ENCODE measurements at regions of chr22 and their contacts with region 1.

Region 1: DNA sequence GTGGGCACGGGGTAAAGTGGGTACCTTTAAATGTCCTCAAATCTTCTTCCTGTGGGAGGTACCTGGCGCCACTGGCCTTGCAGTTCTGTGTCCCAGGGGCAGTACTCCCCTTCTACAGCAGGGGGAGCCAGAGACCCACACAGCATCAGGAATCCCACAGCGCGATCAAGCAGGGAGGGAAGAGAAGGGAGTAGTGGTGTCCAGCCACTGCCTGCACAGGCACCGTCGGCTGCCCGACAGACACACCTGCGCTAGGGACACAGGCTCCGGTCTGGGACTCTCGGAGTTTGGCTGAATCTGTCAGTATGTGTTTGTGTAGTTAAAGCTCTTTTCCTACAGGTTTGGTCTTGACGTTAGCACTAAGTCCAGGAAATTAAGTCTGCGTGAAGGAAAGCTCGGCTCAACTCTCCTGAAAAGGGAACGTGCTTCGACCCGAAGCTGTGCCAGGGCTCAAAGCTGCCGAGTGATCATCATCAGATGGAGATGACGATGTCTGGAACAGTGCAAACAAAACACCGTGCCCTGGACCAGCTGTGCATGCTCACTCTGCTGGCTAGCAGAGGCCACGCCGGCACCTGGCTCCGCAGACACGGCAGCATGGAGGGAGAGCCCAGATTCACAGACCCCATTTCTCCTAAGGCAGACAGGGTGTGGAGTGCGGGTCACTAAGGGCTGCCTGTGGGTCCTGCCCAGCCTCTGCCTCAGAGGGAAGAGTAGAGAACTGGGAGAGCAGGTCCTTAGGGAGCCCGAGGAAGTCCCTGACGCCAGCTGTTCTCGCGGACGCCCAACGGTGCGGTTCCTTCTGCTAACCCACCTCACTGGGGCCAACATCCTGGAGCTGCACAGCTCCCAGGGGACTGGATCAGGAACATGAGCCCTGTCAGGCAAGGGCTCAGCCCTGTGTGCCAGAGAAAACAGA is 56.0 kb upstream of the BID start:
- DNase-seq: peak; percentile 91
- H3K4me3 ChIP-seq: no peak overlapping the region
- H3K27ac ChIP-seq: peak overlapping the region in 7 of 8 donors; percentile 51 to 89 (median 79)
- H3K4me1 ChIP-seq: peaks cover 15 to 48% (median 36%) of the 10 kb centered on the region in 6 donors
- H3K27me3 ChIP-seq: no peaks in the 10 kb centered on the region
- CTCF ChIP-seq: peak; percentile 90 to 99 (median 98)
- POLR2A ChIP-seq: no peak

Region 2: GRCh38 chr22:17717708-17718107 is 112.6 kb before region 1 on chr22:
- intact Hi-C with region 1: no loop called
- DNase-seq: no peak
- H3K4me3 ChIP-seq: no peak overlapping the region
- H3K27ac ChIP-seq: no peak overlapping the region
- H3K4me1 ChIP-seq: no peaks in the 10 kb centered on the region
- H3K27me3 ChIP-seq: no peaks in the 10 kb centered on the region
- CTCF ChIP-seq: no peak
- POLR2A ChIP-seq: no peak

Region 3: GRCh38 chr22:17964643-17965042 is 134.3 kb after region 1 on chr22:
- intact Hi-C with region 1: no loop called
- DNase-seq: peak; percentile 76
- H3K4me3 ChIP-seq: peak overlapping the region in 1 of 8 donors; percentile 37
- H3K27ac ChIP-seq: peak overlapping the region in 7 of 8 donors; percentile 5 to 63 (median 47)
- H3K4me1 ChIP-seq: peaks cover 7 to 97% (median 59%) of the 10 kb centered on the region in 6 donors
- H3K27me3 ChIP-seq: no peaks in the 10 kb centered on the region
- CTCF ChIP-seq: no peak
- POLR2A ChIP-seq: no peak

Region 4: DNA sequence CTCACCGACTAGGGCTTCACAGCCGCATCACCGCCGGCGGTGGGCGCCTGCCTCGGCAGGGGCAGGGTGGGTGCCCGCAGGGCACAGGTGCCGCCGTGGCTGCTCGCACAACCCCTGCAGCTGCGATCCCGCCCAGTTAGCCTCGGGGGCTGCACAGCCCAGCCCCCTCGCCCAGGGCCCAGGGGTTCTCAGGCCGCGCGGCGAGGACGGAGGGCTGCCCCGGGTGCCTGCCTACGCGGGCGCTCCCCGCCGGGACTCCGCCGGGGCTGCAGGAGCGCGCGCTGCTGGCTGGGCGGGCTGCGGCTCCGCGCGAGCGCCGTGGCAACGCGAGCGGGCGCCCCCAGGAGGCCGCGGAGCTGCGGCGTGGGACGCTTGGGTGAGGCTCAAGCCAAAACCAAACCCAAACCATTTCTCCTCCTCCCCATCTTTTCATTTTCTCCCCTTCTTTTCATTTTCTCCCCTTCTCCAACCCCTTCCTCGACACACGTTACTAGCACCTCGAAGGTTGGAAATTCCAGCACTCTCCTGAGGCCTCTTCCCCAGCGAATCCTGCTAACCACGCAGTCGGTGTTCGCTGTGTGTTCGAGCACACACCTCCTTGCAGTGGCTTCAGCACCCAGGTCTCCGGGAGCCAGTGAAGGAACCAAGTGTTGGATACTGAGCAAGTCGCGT is 194.1 kb after region 1 on chr22 and contains the start of gene MICAL3:
- intact Hi-C with region 1: loop called (anchors 5 kb)
- DNase-seq: peak; percentile 93
- H3K4me3 ChIP-seq: peak within 1 kb of the TSS; percentile 63 to 93 (median 75)
- H3K27ac ChIP-seq: peak within 1 kb of the TSS in 7 of 8 donors; percentile 41 to 68 (median 57)
- H3K4me1 ChIP-seq: peaks cover 0 to 28% (median 23%) of the 10 kb centered on the region in 6 donors
- H3K27me3 ChIP-seq: peaks cover 0 to 44% (median 0%) of the 10 kb centered on the region in 7 donors
- CTCF ChIP-seq: peak; percentile 16 to 81 (median 64)
- POLR2A ChIP-seq: no peak
- total RNA-seq, gene MICAL3: 54.3 to 133 (median 92.1) TPM

Region 5: DNA sequence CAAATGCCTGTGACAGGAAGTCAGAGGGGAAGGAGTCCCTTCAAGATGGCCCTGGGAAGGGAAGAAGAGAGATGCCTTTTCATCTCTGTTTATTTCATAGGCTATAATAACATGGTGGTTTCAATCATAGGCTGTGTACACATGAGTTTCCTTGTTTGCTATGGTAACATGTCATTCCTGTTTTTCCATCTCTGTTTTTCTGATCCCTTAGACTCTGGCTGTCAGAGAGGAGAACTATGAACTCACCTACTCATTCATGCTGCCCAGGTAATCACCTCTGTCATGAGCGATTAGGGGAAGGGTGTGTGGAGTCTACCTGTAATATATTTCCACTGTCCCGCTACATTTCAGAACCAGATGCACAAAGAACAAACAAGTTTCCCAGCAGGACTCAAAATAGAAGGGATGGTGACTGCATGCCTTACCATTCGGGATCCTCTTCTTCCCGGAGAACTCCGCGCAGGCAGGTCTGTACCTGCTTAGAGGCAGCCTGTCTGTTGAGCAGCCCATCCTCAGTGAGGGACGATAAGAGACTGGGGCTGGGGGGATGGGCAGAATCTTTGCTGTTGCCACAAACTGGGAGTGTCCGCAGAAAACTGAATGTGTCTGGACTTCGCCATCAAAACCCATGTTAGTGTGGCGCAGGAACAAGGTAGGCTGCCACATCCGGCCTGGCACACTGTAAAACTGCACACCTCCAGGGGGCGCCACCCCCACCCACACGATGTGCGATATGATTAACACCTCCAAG is 240.4 kb after region 1 on chr22:
- intact Hi-C with region 1: loop called (anchors 2 kb)
- DNase-seq: peak; percentile 65
- H3K4me3 ChIP-seq: no peak overlapping the region
- H3K27ac ChIP-seq: no peak overlapping the region
- H3K4me1 ChIP-seq: peaks cover 14 to 62% (median 34%) of the 10 kb centered on the region in 6 donors
- H3K27me3 ChIP-seq: no peaks in the 10 kb centered on the region
- CTCF ChIP-seq: no peak
- POLR2A ChIP-seq: no peak

Measured in spleen (tissue), 13 donors.